ENCODE measurements at regions of chr10 and their contacts with region 1.

Region 1: GRCh38 chr10:23001901-23002516 is 74.2 kb downstream of the ARMC3 start:
- DNase-seq: no peak
- ATAC-seq: peak in 3 of 4 donors; percentile 65 to 82 (median 74)
- H3K4me3 ChIP-seq: no peak overlapping the region
- H3K27ac ChIP-seq: no peak overlapping the region
- H3K4me1 ChIP-seq: peaks cover 4% of the 10 kb centered on the region
- H3K27me3 ChIP-seq: peaks cover 0 to 3% (median 0%) of the 10 kb centered on the region in 3 donors
- CTCF ChIP-seq: no peak

Region 2: GRCh38 chr10:22615819-22616499 is 386.1 kb before region 1 on chr10:
- intact Hi-C with region 1: no loop called
- DNase-seq: no peak
- ATAC-seq: peak in 3 of 4 donors; percentile 45 to 50 (median 46)
- H3K4me3 ChIP-seq: no peak overlapping the region
- H3K27ac ChIP-seq: no peak overlapping the region
- H3K4me1 ChIP-seq: peaks cover 6% of the 10 kb centered on the region
- H3K27me3 ChIP-seq: no peaks in the 10 kb centered on the region
- CTCF ChIP-seq: no peak

Region 3: DNA sequence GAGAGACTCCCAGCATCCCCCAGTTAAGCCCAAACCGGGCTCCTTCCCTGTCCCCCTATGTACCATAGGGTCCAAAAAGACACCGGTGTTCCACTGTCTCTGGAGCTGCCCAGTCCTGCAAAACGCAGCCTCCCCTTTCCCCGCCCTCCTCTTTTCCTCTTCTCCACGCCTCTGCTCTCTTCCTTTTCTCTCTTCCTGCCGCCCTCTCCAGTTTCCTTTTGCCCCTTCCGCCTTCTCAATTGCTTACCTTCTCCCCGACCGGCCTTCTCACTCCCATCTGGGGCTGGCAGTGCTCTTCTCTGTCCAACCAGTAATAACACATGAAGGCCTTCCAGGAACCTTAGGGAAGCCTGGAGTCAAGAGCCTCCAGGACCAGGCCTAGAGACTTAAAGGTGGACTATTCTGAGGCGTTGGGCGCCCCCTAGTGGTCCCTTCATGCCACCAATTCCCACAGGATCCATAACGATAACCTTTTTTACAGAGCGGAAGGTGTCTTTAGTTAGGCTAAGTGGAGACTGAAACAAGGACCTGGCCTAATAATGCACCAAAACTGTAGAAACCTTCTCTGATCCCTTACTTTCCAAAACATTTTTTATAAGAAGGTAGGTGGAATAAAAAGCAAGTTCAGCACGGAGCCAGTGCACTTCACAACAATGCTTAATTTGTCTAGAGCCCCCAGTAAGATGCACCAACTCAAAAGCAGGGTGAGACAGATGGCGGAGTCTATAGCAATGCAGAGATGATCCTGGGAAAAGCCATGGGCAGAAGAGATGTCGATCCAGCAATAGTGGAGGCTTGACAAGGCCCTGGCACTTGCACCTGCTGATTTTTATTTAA is 66.1 kb after region 1 on chr10:
- intact Hi-C with region 1: loop called in 1 of 2 experiments (anchors 5 kb)
- DNase-seq: peak; percentile 72 to 79
- ATAC-seq: peak; percentile 67 to 77 (median 72)
- H3K4me3 ChIP-seq: no peak overlapping the region
- H3K27ac ChIP-seq: no peak overlapping the region
- H3K4me1 ChIP-seq: peaks cover 35% of the 10 kb centered on the region
- H3K27me3 ChIP-seq: no peaks in the 10 kb centered on the region
- CTCF ChIP-seq: peak; percentile 89

Measured in psoas muscle (tissue), 8 donors.